Activated B cell treated with CpG ODN at 0.5 μM for 24 hours (primary cell): ENCODE measurements at regions of chr16 and their contacts with region 1.

Region 1: DNA sequence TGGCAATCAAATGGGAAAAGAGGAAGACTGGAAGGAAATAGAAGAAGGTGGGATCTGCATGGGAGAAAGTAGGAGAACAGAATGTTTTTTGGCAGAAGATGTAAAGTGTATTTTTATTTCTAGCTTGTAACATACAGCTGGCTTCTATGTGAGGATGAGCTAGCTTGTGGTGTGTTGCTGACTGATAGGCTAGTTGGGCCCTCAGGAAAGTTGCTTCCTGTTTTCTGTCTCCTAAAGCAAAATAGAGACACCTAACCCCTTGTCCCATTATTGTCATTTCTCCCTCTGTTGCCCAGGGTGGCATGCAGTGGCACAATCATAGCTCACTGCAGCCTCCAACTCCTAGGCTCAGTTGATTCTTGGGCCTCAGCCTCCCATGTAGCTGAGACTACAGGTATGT is 15.9 kb downstream of the TNRC6A start:
- DNase-seq: no peak
- ATAC-seq: no peak
- H3K4me3 Mint-ChIP-seq: no peak overlapping the region
- H3K27ac Mint-ChIP-seq: no peak overlapping the region
- H3K4me1 Mint-ChIP-seq: peaks cover 81% of the 10 kb centered on the region
- H3K27me3 Mint-ChIP-seq: no peaks in the 10 kb centered on the region
- CTCF ChIP-seq: no peak

Region 2: GRCh38 chr16:24589997-24590396 is 155.4 kb before region 1 on chr16:
- CTCF ChIA-PET with region 1: no interaction called
- POLR2A ChIA-PET with region 1: no interaction called
- intact Hi-C with region 1: no loop called
- DNase-seq: no peak
- ATAC-seq: no peak
- H3K4me3 Mint-ChIP-seq: no peak overlapping the region
- H3K27ac Mint-ChIP-seq: no peak overlapping the region
- H3K4me1 Mint-ChIP-seq: no peaks in the 10 kb centered on the region
- H3K27me3 Mint-ChIP-seq: peaks cover 4% of the 10 kb centered on the region
- CTCF ChIP-seq: no peak

Region 3: GRCh38 chr16:24645739-24646645 is 99.4 kb before region 1 on chr16:
- CTCF ChIA-PET with region 1: no interaction called
- POLR2A ChIA-PET with region 1: no interaction called
- intact Hi-C with region 1: no loop called
- DNase-seq: no peak
- ATAC-seq: no peak
- H3K4me3 Mint-ChIP-seq: no peak overlapping the region
- H3K27ac Mint-ChIP-seq: no peak overlapping the region
- H3K4me1 Mint-ChIP-seq: no peaks in the 10 kb centered on the region
- H3K27me3 Mint-ChIP-seq: peaks cover 11% of the 10 kb centered on the region
- CTCF ChIP-seq: no peak

Region 4: DNA sequence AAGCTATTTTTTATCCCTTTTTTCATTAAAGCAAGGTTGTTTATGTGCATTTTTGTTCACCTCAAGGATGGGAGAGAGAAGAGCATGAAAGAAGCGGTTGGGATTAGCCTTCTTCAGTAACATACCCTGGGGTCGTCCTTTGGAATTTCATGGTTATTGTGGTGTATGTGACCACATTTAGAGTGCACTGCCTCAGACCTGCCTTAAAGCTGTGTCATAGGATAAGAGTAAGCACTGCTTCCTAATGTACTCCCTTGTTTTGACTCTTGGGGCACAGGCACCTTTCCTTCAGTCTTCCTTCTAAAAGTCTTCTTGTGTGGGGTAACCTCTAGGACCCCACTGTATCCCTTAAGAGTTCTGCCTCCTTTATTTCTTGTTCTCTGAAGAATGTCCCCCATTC is 13.0 kb after region 1 on chr16:
- CTCF ChIA-PET with region 1: no interaction called
- POLR2A ChIA-PET with region 1: no interaction called
- intact Hi-C with region 1: loop called (anchors 2 kb)
- DNase-seq: no peak
- ATAC-seq: no peak
- H3K4me3 Mint-ChIP-seq: no peak overlapping the region
- H3K27ac Mint-ChIP-seq: no peak overlapping the region
- H3K4me1 Mint-ChIP-seq: peaks cover 21% of the 10 kb centered on the region
- H3K27me3 Mint-ChIP-seq: no peaks in the 10 kb centered on the region
- CTCF ChIP-seq: no peak